ENCODE measurements at regions of chr9 and their contacts with region 1.

Region 1: GRCh38 chr9:98860871-98861293 is 53.4 kb downstream of the GALNT12 start:
- DNase-seq: peak; percentile 74
- H3K4me3 ChIP-seq: no peak overlapping the region
- H3K27ac ChIP-seq: peak overlapping the region; percentile 94
- H3K4me1 ChIP-seq: peaks cover 52% of the 10 kb centered on the region
- H3K27me3 ChIP-seq: no peaks in the 10 kb centered on the region
- CTCF ChIP-seq: peak; percentile 83

Region 2: DNA sequence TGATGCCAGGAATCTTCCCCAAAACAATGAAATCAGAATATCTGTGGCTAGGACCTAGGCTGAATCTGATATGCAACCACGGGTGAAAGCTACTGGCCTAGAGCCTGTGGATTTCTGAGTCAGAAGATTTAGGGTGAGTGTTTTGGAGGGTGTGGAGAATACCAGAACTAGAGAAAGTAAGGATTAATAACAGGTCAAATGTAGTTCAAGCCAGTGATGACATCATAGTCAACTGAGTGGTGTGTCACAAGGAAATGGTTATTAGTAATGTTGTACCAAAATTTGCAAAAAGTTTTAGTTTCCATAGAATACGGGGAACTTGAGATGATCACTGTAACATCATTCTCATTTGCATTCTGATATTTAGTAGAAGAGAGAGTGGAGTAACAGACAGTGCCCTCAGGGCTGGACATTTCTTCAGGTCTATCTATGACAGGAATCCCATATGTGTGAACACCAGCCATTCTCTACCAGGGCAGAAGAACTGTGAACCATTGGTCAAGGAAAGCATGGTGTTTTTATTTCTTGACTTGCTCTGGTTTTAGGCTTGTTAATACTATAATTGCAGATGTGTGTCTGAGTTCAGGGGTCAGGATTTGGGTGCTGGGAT is 49.7 kb before region 1 on chr9:
- intact Hi-C with region 1: no loop called
- DNase-seq: no peak
- H3K4me3 ChIP-seq: no peak overlapping the region
- H3K27ac ChIP-seq: no peak overlapping the region
- H3K4me1 ChIP-seq: peaks cover 10% of the 10 kb centered on the region
- H3K27me3 ChIP-seq: peaks cover 49% of the 10 kb centered on the region
- CTCF ChIP-seq: no peak

Region 3: GRCh38 chr9:98958271-98958984 is 97.5 kb after region 1 on chr9:
- intact Hi-C with region 1: no loop called
- DNase-seq: no peak
- H3K4me3 ChIP-seq: peak overlapping the region; percentile 4
- H3K27ac ChIP-seq: peak overlapping the region; percentile 86
- H3K4me1 ChIP-seq: peaks cover 71% of the 10 kb centered on the region
- H3K27me3 ChIP-seq: no peaks in the 10 kb centered on the region
- CTCF ChIP-seq: no peak

Region 4: DNA sequence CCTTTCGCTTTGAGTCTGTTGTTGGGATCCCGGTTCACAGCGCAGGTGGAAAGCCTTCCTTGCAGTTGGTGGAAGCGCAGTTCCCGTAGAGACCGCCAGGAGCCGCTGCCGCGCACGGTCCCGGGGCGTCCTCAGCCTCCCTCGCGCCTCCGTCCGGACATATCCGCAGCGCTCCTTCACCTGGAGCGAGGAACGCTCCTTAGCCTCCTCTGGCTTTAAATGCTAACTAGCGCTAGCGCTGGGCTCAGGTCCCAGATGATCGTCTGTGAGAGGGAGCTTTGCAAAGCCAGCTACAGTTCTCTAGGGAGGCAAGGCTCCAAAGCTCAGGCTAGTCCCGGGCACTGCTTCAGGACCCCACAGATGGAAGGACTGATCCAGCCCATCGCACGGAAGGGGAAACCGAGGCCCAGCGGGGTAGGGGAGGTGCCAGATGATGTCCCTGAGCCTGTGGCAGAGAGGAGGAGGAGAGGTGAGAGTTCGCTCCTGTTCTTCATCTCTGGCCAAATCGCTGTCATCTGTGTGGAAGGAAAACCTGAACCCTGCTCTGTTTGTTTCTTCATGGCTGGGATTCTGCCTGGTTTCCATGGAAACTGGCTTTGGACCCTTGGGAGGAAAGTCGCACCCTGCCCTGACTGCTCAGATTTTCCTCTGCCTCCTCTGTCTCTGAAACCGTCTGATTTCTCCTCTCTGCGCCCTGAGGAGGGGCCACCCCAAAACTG is 114.3 kb after region 1 on chr9:
- intact Hi-C with region 1: loop called (anchors 10 kb)
- DNase-seq: peak; percentile 87
- H3K4me3 ChIP-seq: peak overlapping the region; percentile 58
- H3K27ac ChIP-seq: peak overlapping the region; percentile 86
- H3K4me1 ChIP-seq: peaks cover 97% of the 10 kb centered on the region
- H3K27me3 ChIP-seq: no peaks in the 10 kb centered on the region
- CTCF ChIP-seq: peak; percentile 100

Region 5: DNA sequence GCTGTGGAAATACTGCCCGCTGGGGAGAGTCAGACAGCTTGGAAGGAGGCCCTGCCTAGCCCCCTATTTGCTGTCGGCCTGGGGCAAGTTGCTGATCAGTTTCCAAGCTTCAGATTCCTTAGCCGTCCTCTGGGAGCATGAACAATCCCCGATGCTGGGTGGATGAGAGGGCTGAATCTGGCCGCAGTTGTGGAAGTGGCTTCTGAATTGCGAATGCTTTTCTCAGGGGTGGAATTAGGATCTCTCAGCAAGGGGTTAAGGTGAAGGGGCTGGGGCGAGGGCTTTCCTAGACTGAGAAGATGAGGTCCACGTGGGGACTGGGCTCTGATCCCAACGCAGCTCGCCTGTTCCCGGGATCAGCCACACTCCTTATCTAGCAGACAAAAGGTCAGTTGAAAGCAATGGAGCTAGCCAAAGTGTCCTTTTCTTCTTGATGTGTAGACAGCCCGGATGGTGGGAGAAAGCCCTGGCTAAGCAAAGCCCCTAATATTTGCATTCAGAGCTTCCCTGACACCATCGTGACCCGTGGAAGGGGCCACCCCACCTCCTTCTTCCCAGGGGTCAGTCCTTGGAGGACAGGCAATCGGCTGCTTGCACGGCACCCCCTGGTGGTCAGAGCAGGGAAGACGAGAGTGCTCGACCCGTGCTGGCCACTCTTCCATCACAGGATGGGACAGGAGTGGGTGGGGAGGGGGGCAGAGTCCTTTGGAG is 137.7 kb after region 1 on chr9:
- intact Hi-C with region 1: loop called (anchors 5 kb)
- DNase-seq: peak; percentile 89
- H3K4me3 ChIP-seq: peak overlapping the region; percentile 15
- H3K27ac ChIP-seq: peak overlapping the region; percentile 90
- H3K4me1 ChIP-seq: peaks cover 75% of the 10 kb centered on the region
- H3K27me3 ChIP-seq: no peaks in the 10 kb centered on the region
- CTCF ChIP-seq: peak; percentile 93

Measured in left ventricle myocardium inferior (tissue), 1 donor.